ENCODE measurements at regions of chr12 and their contacts with region 1.

Region 1: DNA sequence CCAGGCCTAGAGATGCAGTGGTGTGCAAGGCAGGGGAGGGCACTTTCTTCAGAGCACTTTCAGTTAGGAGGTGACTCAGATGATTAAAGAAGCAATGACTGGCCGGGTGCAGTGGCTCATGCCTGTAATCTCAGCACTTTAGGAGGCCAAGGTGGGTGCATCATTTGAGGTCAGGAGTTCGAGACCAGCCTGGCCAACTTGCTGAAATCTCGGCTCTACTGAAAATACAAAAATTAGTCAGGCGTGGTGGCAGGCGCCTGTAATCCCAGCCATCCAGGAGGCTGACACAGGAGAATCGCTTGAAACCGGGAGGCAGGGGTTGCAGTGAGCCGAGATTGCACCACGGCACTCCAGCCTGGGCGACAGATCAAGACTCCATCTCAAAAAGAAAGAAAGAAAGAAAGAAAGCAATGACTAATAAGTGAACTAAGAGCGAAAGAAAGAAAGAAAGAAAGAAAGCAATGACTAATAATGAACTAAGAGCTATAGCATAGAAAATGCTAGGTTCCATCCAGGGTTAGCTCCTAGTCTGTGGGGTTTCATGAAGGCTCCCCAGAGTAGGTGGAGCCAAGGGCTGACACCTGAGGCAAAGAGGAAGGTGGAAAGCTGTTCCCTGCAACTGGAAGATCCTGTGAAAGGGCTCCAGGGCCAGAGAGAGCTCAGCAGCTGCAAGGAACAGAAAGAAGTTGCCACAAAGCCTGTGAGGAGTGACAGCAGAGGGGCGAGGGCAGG is 334.5 kb downstream of the CACNA1C start:
- DNase-seq: no peak
- H3K4me3 ChIP-seq: no peak overlapping the region
- H3K27ac ChIP-seq: no peak overlapping the region
- H3K4me1 ChIP-seq: no peaks in the 10 kb centered on the region
- H3K27me3 ChIP-seq: no peaks in the 10 kb centered on the region
- CTCF ChIP-seq: no peak

Region 2: DNA sequence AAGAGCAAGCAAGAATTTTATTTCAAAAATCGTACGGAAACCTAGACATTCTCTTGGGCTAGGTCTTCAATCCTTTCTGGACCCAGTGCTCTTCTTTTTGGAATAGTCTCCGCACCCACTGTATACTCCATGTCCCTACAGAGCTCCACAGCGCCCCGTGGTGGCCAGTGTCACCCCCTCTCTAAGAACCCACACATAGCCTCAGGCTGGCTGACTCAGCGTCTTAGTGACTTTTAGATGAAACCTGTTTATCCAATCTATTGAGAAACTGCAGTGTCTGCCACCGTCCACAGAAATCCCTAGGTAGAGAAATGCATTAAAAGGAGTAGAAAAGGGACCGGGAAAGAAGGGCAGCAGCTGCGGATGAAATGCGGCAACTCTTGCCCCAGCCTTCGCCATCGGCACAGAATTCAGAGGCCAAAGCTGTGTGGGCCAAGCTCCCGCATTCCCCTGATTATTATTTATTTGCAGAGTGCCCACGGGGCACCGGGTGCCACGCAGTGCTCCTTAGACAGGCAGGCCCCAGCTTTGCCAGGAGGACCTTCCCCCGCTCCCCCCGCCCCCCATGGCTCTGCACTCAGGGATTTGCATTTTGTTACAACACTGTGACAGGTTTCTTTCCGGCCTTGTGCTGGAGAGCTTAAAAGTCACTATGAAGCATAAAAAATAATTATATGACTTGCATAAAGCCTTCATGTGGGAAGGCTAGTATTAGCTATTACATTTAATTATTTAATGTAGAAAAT is 237.4 kb after region 1 on chr12:
- CTCF ChIA-PET with region 1: no interaction called
- POLR2A ChIA-PET with region 1: interaction called, 16 read pairs
- intact Hi-C with region 1: no loop called
- DNase-seq: peak; percentile 85
- H3K4me3 ChIP-seq: no peak overlapping the region
- H3K27ac ChIP-seq: no peak overlapping the region
- H3K4me1 ChIP-seq: peaks cover 11% of the 10 kb centered on the region
- H3K27me3 ChIP-seq: no peaks in the 10 kb centered on the region
- CTCF ChIP-seq: peak; percentile 90

Region 3: DNA sequence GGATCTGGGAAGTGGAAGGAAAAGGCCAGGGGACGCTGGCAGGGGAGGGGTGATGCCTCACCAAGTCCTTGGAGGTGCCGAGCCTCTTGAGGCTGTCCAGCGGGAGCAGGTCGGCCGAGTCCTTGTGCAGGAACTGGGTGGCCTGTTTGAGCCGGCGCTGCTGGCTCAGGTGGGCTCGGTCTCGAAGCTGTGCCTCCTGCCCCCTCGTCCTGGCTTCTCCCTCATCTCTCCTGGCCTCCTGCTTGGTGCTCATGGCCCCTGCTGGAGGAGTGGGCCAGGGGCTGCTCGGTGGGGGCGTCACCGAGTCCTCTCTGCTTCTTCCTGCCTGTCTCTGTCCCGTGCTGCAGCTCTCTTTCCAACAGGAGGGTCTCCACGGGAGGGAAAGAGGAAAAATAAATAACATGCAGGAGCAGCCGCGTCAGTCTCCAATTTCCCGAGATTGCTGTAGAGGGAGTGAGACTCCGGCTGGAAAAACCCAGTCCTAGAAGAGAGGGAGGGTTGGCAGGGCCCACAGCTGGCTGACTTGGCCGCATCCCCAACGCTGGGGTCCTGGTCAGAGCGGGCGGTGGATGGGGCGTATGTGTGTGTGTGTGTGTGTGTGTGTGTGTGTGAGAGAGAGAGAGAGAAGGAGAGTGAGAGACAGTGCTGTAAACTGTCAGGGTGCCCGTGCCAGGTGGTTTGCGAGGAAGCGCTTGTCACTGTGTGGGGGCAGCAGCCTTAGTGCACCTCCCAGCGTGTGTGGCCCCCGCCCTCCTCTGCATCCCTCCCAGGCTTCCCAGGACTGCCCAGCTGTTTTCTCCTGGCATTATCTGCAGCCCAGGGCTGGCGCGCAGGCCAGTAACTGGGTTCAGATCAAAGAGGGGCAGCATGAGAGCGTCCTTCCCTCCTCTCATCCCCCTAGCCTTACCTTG is 447.6 kb after region 1 on chr12 and contains the start of gene NRIP2:
- CTCF ChIA-PET with region 1: no interaction called
- POLR2A ChIA-PET with region 1: no interaction called
- intact Hi-C with region 1: no loop called
- DNase-seq: peak; percentile 20
- H3K4me3 ChIP-seq: no peak within 1 kb of the TSS
- H3K27ac ChIP-seq: no peak within 1 kb of the TSS
- H3K4me1 ChIP-seq: peaks cover 16% of the 10 kb centered on the region
- H3K27me3 ChIP-seq: no peaks in the 10 kb centered on the region
- CTCF ChIP-seq: no peak
- total RNA-seq, gene NRIP2: 0.28 and 0.39 TPM in 2 replicates